ENCODE measurements at regions of chrX and their contacts with region 1.

Region 1: GRCh38 chrX:76172325-76172893 is 453 bp upstream of the PBDC1 start:
- DNase-seq: no peak
- H3K4me3 Mint-ChIP-seq: peak overlapping the region; percentile 89
- H3K27ac Mint-ChIP-seq: peak overlapping the region; percentile 94
- H3K4me1 Mint-ChIP-seq: peaks cover 54% of the 10 kb centered on the region
- H3K27me3 Mint-ChIP-seq: no peaks in the 10 kb centered on the region

Region 2: DNA sequence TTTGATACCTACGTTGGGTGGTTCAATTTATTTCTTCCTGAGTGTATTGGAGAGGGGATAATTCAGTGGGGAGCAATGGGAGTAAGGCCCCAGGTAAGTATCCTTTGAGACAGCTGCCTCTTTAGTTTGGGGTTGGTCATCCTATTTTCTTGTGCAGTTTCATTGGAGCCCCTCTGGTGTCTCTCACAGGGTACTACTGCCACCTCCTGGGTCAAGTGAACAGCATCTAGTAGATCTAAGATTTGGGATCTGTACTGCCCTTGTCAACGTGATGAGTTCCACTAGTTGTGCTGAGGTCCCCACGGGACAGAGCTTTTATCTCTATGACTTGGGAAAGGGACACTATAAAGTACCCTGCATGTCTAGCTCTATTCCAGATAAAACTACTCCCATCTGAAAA is 81.0 kb after region 1 on chrX:
- CTCF ChIA-PET with region 1: interaction called, 6 read pairs
- POLR2A ChIA-PET with region 1: no interaction called
- intact Hi-C with region 1: loop called (anchors 10 kb)
- DNase-seq: peak; percentile 42
- H3K4me3 Mint-ChIP-seq: no peak overlapping the region
- H3K27ac Mint-ChIP-seq: no peak overlapping the region
- H3K4me1 Mint-ChIP-seq: no peaks in the 10 kb centered on the region
- H3K27me3 Mint-ChIP-seq: no peaks in the 10 kb centered on the region

Region 3: GRCh38 chrX:76427560-76428242 is 255.3 kb after region 1 on chrX and contains the start of gene MAGEE1:
- CTCF ChIA-PET with region 1: no interaction called
- POLR2A ChIA-PET with region 1: no interaction called
- intact Hi-C with region 1: loop called (anchors 10 kb)
- DNase-seq: peak; percentile 87
- H3K4me3 Mint-ChIP-seq: peak within 1 kb of the TSS; percentile 86
- H3K27ac Mint-ChIP-seq: peak within 1 kb of the TSS; percentile 74
- H3K4me1 Mint-ChIP-seq: peaks cover 38% of the 10 kb centered on the region
- H3K27me3 Mint-ChIP-seq: no peaks in the 10 kb centered on the region
- total RNA-seq, gene MAGEE1: 3.2 to 3.7 TPM